GM12878 (cell line): ENCODE measurements at regions of chr19 and their contacts with region 1.

Region 1: GRCh38 chr19:2061495-2062381 is 10.7 kb upstream of the MKNK2 start:
- DNase-seq: peak; percentile 86
- ATAC-seq: peak; percentile 91
- H3K4me3 ChIP-seq: peak overlapping the region; percentile 94
- H3K27ac ChIP-seq: peak overlapping the region; percentile 98
- H3K4me1 ChIP-seq: peaks cover 22% of the 10 kb centered on the region
- H3K27me3 ChIP-seq: no peaks in the 10 kb centered on the region
- CTCF ChIP-seq: peak in 2 of 3 experiments; percentile 20 to 51; a peak in 4 of 6 replicates
- EP300 ChIP-seq: peak; percentile 14 to 25; a peak in 1 of 4 replicates
- POLR2A ChIP-seq: peak; percentile 88
- RAD21 ChIP-seq: peak; percentile 31; the same call in 1 of the 2 replicates

Region 2: GRCh38 chr19:1911995-1912394 is 149.7 kb before region 1 on chr19:
- CTCF ChIA-PET with region 1: no interaction called
- POLR2A ChIA-PET with region 1: no interaction called
- RAD21 ChIA-PET with region 1: no interaction called
- SMC1A ChIA-PET with region 1: no interaction called
- in situ Hi-C with region 1: no loop called
- intact Hi-C with region 1: no loop called
- DNase-seq: no peak
- ATAC-seq: no peak
- H3K4me3 ChIP-seq: no peak overlapping the region
- H3K27ac ChIP-seq: no peak overlapping the region
- H3K4me1 ChIP-seq: peaks cover 11% of the 10 kb centered on the region
- H3K27me3 ChIP-seq: no peaks in the 10 kb centered on the region
- CTCF ChIP-seq: no peak
- EP300 ChIP-seq: no peak
- POLR2A ChIP-seq: no peak
- RAD21 ChIP-seq: no peak

Region 3: DNA sequence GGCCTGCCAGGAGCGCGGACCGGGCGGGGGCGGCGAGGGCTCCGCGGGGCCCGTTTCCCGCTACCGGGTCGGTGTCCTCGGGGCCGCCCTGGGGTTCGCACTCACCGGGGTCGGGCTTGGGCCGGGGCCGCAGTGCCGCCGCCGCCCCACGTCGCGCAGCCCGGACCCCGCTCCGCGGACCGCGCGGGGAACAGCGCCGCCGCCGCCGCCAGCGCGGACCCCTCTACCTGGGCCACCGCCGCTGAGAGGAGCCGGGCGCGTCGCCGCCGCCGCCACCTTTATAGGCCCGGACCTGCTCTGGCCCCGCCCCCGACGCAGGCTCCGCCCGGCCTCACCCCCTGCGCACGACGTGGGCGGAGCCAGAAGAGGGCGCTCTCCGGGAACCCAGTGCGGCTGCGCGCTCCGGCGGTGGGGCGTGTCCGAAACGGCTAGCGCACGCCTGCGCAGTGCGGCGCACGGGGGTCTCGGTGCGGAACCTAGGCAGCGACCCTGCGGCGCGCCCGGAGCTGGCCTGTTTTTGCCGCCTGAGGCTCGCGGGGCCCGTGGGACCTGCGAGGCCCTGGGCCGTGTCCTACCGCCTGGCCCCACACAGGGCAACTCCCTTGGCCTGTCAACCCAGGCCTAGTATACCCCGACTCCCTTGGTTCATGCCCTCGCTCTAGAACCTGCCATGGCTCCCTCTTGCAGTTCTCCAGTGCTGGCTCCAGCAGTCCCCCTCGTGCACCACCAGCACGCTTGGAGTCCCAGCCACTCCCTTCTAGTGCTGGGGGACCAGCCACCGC is 10.6 kb before region 1 on chr19 and contains the start of gene MKNK2:
- CTCF ChIA-PET with region 1: interaction called, 6 read pairs
- POLR2A ChIA-PET with region 1: interaction called, 13 read pairs
- RAD21 ChIA-PET with region 1: interaction called, 6 read pairs
- SMC1A ChIA-PET with region 1: interaction called, 12 read pairs
- in situ Hi-C with region 1: no loop called
- intact Hi-C with region 1: no loop called
- DNase-seq: no peak
- ATAC-seq: peak; percentile 48
- H3K4me3 ChIP-seq: peak within 1 kb of the TSS; percentile 83
- H3K27ac ChIP-seq: peak within 1 kb of the TSS; percentile 86
- H3K4me1 ChIP-seq: peaks cover 57% of the 10 kb centered on the region
- H3K27me3 ChIP-seq: no peaks in the 10 kb centered on the region
- CTCF ChIP-seq: peak; percentile 49 to 75 (median 55); a peak in 5 of 6 replicates
- EP300 ChIP-seq: no peak
- POLR2A ChIP-seq: peak; percentile 98
- RAD21 ChIP-seq: no peak
- polyA plus RNA-seq, gene MKNK2: 9.6 to 17.6 TPM